ENCODE measurements at regions of chr5 and their contacts with region 1.

Region 1: DNA sequence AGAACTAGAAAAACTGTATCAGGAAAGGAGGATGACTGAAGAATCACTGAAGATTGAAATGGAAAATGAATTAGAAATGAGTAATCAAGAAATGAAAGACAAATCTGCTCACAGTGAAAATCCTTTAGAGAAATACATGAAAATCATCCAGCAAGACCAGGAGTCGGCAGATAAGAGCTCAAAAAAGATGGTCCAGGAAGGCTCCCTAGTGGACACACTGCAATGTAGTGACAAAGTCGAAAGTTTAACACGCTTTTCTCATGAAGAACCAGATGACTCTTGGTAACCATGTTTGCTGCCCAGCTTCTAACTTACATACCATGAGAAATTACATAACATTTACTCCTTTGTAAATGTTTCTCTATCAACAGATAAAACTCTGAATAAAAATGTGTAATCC is 37.1 kb downstream of the CPLANE1 start:
- H3K4me3 ChIP-seq: no peak overlapping the region
- H3K27ac ChIP-seq: no peak overlapping the region
- H3K4me1 ChIP-seq: peaks cover 3% of the 10 kb centered on the region; the same call in 1 of the 2 replicates
- CTCF ChIP-seq: no peak

Region 2: GRCh38 chr5:37701868-37702267 is 489.8 kb after region 1 on chr5:
- CTCF ChIA-PET with region 1: interaction called, 11 read pairs
- POLR2A ChIA-PET with region 1: no interaction called
- H3K4me3 ChIP-seq: no peak overlapping the region
- H3K27ac ChIP-seq: no peak overlapping the region
- H3K4me1 ChIP-seq: peaks cover 13% of the 10 kb centered on the region
- CTCF ChIP-seq: no peak

Measured in HEK293 (cell line).